CD4-positive, alpha-beta T cell (primary cell): ENCODE measurements at regions of chr6 and their contacts with region 1.

Region 1: GRCh38 chr6:63677282-63677681 is 41.7 kb downstream of the PHF3 start:
- DNase-seq: no peak
- ATAC-seq: no peak
- H3K4me3 ChIP-seq: no peak overlapping the region
- H3K4me3 Mint-ChIP-seq: no peak overlapping the region
- H3K27ac ChIP-seq: no peak overlapping the region
- H3K27ac Mint-ChIP-seq: no peak overlapping the region
- H3K4me1 ChIP-seq: no peaks in the 10 kb centered on the region
- H3K4me1 Mint-ChIP-seq: peaks cover 41% of the 10 kb centered on the region
- H3K27me3 ChIP-seq: no peaks in the 10 kb centered on the region
- H3K27me3 Mint-ChIP-seq: no peaks in the 10 kb centered on the region
- CTCF ChIP-seq: no peak

Region 2: DNA sequence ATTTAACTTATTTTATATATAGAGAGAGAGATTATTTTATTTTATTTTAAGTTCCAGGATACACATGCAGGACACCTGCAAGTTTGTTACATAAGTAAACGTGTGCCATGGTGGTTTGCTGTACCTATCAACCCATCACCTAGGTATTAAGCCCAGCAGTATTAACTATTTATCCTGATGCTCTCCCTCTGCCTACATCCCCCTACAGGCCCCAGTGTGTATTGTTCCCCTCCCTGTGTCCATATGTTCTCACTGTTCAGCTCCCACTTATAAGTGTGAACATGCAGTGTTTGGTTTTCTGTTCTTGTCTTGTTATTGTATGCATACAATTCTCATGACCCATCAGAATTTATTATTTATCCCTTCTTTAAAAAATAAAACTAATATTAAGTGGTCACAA is 431.4 kb before region 1 on chr6:
- CTCF ChIA-PET with region 1: no interaction called
- POLR2A ChIA-PET with region 1: no interaction called
- intact Hi-C with region 1: no loop called
- DNase-seq: no peak
- ATAC-seq: no peak
- H3K4me3 ChIP-seq: no peak overlapping the region
- H3K4me3 Mint-ChIP-seq: no peak overlapping the region
- H3K27ac ChIP-seq: no peak overlapping the region
- H3K27ac Mint-ChIP-seq: no peak overlapping the region
- H3K4me1 ChIP-seq: no peaks in the 10 kb centered on the region
- H3K4me1 Mint-ChIP-seq: no peaks in the 10 kb centered on the region
- H3K27me3 ChIP-seq: no peaks in the 10 kb centered on the region
- H3K27me3 Mint-ChIP-seq: no peaks in the 10 kb centered on the region
- CTCF ChIP-seq: no peak

Region 3: GRCh38 chr6:63333440-63333839 is 343.8 kb before region 1 on chr6:
- CTCF ChIA-PET with region 1: no interaction called
- POLR2A ChIA-PET with region 1: no interaction called
- intact Hi-C with region 1: no loop called
- DNase-seq: no peak
- ATAC-seq: no peak
- H3K4me3 ChIP-seq: no peak overlapping the region
- H3K4me3 Mint-ChIP-seq: no peak overlapping the region
- H3K27ac ChIP-seq: no peak overlapping the region
- H3K27ac Mint-ChIP-seq: no peak overlapping the region
- H3K4me1 ChIP-seq: no peaks in the 10 kb centered on the region
- H3K4me1 Mint-ChIP-seq: no peaks in the 10 kb centered on the region
- H3K27me3 ChIP-seq: no peaks in the 10 kb centered on the region
- H3K27me3 Mint-ChIP-seq: no peaks in the 10 kb centered on the region
- CTCF ChIP-seq: no peak

Region 4: DNA sequence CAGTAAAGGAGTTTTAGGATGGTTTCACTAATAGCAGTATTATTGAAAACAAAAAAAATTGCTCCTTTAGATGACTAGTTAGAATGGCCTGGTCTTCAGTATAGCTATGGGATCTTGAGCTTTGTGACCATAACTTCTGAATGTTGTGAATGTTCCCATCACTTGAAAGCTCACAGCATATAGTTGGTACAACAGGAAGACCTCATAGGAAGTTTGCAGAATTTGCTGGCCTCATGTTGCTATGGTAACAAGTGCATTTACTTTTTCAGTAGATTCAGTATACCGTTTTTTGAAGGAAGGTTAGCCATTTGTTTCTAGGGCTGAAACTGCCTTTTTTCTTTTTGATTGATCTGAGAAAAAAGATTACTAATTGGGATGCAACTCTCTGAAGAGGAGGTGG is 33.4 kb before region 1 on chr6:
- CTCF ChIA-PET with region 1: no interaction called
- POLR2A ChIA-PET with region 1: no interaction called
- intact Hi-C with region 1: loop called in 1 of 2 experiments (anchors 5 kb)
- DNase-seq: peak in 5 of 14 experiments; percentile 16 to 76 (median 71)
- ATAC-seq: peak; percentile 70
- H3K4me3 ChIP-seq: no peak overlapping the region
- H3K4me3 Mint-ChIP-seq: peak overlapping the region; percentile 27
- H3K27ac ChIP-seq: no peak overlapping the region
- H3K27ac Mint-ChIP-seq: peak overlapping the region; percentile 21
- H3K4me1 ChIP-seq: peaks cover 13% of the 10 kb centered on the region
- H3K4me1 Mint-ChIP-seq: peaks cover 95% of the 10 kb centered on the region
- H3K27me3 ChIP-seq: no peaks in the 10 kb centered on the region
- H3K27me3 Mint-ChIP-seq: no peaks in the 10 kb centered on the region
- CTCF ChIP-seq: no peak

Region 5: DNA sequence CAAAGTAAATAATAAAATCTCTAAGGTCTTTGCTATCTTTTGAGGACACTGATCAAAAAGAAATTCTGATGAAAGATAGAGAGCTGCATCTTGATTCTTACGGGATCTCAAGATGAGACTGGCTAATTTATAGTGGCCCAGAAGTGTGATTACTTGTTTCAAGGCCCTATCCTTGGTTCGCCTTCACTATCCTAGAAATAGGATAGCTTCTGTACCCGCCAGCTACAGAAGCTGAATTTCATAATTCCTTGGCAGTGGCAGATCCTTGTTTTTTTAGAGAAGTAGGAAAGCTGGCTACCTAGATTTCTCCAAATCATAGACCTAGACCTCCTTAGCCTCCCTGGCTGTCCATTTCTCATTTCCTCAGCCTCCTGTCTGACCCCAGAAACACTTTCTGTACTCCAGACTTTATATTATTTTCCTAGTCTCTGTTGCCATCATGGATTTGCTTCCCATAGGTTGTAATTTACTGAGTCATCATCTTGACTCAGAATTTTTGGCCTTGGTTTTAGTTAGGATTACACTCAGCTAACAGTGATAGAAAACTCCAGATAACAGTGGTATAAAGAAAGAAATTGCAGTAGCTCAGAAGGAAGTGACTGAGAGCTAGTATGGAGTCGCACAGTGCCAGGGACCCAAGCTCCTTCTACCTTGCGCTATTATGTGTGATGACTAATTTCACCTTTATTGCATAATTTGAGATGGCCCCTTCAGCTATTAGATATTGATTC is 14.0 kb before region 1 on chr6:
- CTCF ChIA-PET with region 1: no interaction called
- POLR2A ChIA-PET with region 1: no interaction called
- intact Hi-C with region 1: loop called in 1 of 2 experiments (anchors 2 kb)
- DNase-seq: no peak
- ATAC-seq: no peak
- H3K4me3 ChIP-seq: no peak overlapping the region
- H3K4me3 Mint-ChIP-seq: no peak overlapping the region
- H3K27ac ChIP-seq: no peak overlapping the region
- H3K27ac Mint-ChIP-seq: no peak overlapping the region
- H3K4me1 ChIP-seq: peaks cover 24% of the 10 kb centered on the region
- H3K4me1 Mint-ChIP-seq: peaks cover 90% of the 10 kb centered on the region
- H3K27me3 ChIP-seq: no peaks in the 10 kb centered on the region
- H3K27me3 Mint-ChIP-seq: no peaks in the 10 kb centered on the region
- CTCF ChIP-seq: no peak

Region 6: GRCh38 chr6:64040113-64040512 is 362.8 kb after region 1 on chr6:
- CTCF ChIA-PET with region 1: no interaction called
- POLR2A ChIA-PET with region 1: no interaction called
- intact Hi-C with region 1: no loop called
- DNase-seq: no peak
- ATAC-seq: no peak
- H3K4me3 ChIP-seq: no peak overlapping the region
- H3K4me3 Mint-ChIP-seq: no peak overlapping the region
- H3K27ac ChIP-seq: no peak overlapping the region
- H3K27ac Mint-ChIP-seq: no peak overlapping the region
- H3K4me1 ChIP-seq: no peaks in the 10 kb centered on the region
- H3K4me1 Mint-ChIP-seq: no peaks in the 10 kb centered on the region
- H3K27me3 ChIP-seq: no peaks in the 10 kb centered on the region
- H3K27me3 Mint-ChIP-seq: no peaks in the 10 kb centered on the region
- CTCF ChIP-seq: no peak